HAP-1 (cell line): ENCODE measurements at regions of chr14 and their contacts with region 1.

Region 1: GRCh38 chr14:73526569-73526968 is 10.4 kb upstream of the ACOT1 start:
- DNase-seq: no peak
- H3K4me3 ChIP-seq: no peak overlapping the region
- H3K4me1 ChIP-seq: no peaks in the 10 kb centered on the region
- H3K27me3 ChIP-seq: no peaks in the 10 kb centered on the region

Region 2: GRCh38 chr14:73472185-73473114 is 54.1 kb before region 1 on chr14:
- in situ Hi-C with region 1: no loop called
- DNase-seq: peak; percentile 22 to 73
- H3K4me3 ChIP-seq: no peak overlapping the region
- H3K4me1 ChIP-seq: no peaks in the 10 kb centered on the region
- H3K27me3 ChIP-seq: no peaks in the 10 kb centered on the region

Region 3: DNA sequence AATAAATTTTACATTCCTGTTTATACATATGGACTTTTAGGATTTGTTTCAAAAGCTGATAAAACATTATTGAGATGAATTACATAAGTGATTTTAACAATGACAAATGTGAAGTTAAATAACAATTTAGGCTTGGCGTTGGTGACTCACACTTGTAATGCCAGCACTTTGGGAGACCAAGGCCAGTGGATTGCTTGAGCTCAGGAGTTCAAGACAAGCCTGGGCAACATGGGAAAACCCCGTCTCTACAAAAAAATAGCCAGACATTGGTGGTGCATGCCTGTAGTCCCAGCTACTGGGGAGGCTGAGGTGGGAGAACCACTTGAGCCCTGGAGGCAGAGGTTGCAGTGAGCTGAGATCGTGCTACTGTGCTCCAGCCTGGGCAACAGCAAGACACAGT is 49.8 kb after region 1 on chr14:
- in situ Hi-C with region 1: loop called (anchors 10 kb)
- DNase-seq: no peak
- H3K4me3 ChIP-seq: no peak overlapping the region
- H3K4me1 ChIP-seq: no peaks in the 10 kb centered on the region
- H3K27me3 ChIP-seq: no peaks in the 10 kb centered on the region